Left cardiac atrium (tissue), 4 donors: ENCODE measurements at regions of chr22 and their contacts with region 1.

Region 1: GRCh38 chr22:31977141-31977841 is 33.0 kb downstream of the YWHAH start:
- DNase-seq: peak; percentile 75
- ATAC-seq: peak; percentile 88 to 90

Region 2: DNA sequence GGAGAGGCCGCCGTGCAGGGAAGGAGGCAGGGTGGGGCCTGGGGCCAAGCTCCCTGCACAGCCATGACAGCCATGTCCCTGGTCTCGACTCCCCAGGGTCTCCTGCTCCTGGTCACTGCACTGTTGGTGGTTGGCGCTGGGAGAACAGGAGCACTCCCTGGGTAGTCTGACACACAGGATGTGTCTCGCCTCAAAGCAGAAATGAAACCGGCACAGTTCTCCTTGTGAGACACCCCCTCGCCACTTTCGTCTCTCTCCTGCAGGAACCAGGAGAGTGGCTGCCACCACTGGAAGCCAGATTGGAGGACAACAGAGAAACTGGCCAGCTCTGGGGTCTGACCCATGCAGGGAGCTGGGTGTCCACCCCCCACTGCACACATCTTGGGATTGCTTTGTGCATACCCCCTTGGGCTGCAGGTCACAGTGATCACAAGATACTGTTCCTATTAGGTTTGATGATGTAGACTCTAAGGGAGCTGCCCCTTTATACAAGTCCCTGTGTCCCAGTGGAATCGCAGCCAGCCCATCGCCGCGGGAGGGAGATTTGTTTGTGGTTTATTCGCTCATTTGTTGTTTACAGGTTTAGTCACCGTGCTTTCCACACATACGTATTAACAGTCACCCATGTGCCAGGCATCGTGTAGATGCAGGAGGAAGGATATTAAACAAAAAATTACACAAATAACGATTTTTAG is 59.9 kb before region 1 on chr22:
- intact Hi-C with region 1: no loop called
- DNase-seq: no peak
- ATAC-seq: peak; percentile 57 to 75

Region 3: GRCh38 chr22:32050678-32051515 is 73.6 kb after region 1 on chr22:
- intact Hi-C with region 1: no loop called
- DNase-seq: peak; percentile 45
- ATAC-seq: peak; percentile 81 to 94

Region 4: GRCh38 chr22:32080904-32081303 is 103.6 kb after region 1 on chr22:
- intact Hi-C with region 1: loop called (anchors 1 to 5 kb)
- DNase-seq: no peak
- ATAC-seq: peak; percentile 69

Region 5: DNA sequence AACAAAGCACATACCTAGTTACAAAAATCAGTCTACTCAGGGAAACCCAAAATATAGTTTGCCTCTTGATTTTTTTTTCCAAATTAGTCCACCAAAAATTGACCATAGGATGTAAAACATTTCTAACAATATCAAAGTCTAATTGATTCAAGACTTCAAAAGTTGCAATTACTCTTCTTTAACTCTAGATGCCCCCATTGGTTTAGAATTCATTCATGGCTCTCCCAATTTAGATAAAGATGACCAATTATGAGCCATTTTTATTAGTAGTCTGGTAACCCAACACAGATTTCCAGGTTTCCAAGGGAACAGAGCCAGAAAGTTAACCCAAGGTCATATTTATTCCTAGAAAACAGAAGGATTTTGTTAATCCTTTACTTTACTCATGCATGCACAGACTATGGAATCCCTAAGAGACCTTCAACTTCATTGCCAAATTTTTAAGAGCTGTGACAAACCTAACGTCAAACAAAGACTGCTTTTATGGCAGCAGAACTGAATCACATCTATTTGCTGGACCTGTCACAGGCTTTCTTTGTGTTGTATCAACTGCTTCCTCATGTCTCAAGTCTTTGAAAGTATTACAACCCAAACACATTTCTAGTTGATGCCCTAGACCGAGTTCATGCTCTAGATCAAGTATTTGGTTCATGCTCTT is 126.5 kb after region 1 on chr22:
- intact Hi-C with region 1: no loop called
- DNase-seq: no peak
- ATAC-seq: no peak